Posterior vena cava (tissue), 2 donors: ENCODE measurements at regions of chr11 and their contacts with region 1.

Region 1: GRCh38 chr11:115112754-115113153 is 391.5 kb downstream of the CADM1 start:
- DNase-seq: no peak

Region 2: DNA sequence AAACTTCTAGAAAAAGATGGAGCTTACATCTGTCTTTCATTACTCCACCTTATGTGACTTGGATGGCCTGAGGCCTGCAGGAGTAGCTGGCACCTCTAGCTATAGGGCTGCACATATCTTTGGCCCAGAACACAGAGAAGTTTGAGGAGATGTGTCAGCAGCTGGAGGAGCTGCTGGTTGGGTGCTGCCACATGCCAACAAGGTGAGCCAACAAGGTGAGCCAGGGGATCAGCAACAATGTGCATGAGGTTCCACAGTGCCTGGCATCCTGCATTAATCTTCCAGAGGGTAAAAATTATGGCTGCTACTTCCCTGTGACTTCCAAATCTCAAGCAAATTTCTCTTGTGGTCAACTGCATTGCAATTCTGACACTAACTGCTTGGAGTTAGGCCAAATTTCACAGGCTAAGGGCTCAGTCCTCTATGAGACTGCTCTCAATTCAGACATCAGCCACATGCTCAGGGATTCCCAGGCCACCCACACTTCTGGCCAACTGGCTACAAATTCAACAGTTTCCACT is 696.3 kb before region 1 on chr11:
- intact Hi-C with region 1: loop called in 1 of 2 experiments (anchors 5 kb)
- DNase-seq: no peak

Region 3: DNA sequence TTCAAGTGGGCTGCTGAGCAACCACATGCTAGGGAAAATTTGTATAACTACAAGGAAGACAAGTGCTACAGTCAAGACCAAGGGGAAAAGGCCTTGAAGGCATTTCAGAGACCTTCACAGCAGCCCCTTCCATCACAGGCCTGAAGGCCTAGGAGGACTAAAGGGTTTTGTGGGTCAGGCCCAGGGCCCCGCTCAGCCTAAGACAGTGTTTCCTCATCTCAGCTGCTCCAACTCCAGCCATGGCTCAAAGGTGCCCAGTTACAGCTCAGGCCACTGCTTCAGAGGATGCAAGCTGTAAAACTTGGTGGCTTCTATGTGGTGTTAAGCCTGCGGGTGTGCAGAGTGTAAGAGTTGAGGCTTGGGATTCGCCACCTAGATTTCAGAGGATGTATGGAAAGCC is 174.0 kb before region 1 on chr11:
- intact Hi-C with region 1: no loop called
- DNase-seq: no peak

Region 4: GRCh38 chr11:114953039-114953438 is 159.7 kb before region 1 on chr11:
- intact Hi-C with region 1: no loop called
- DNase-seq: no peak

Region 5: DNA sequence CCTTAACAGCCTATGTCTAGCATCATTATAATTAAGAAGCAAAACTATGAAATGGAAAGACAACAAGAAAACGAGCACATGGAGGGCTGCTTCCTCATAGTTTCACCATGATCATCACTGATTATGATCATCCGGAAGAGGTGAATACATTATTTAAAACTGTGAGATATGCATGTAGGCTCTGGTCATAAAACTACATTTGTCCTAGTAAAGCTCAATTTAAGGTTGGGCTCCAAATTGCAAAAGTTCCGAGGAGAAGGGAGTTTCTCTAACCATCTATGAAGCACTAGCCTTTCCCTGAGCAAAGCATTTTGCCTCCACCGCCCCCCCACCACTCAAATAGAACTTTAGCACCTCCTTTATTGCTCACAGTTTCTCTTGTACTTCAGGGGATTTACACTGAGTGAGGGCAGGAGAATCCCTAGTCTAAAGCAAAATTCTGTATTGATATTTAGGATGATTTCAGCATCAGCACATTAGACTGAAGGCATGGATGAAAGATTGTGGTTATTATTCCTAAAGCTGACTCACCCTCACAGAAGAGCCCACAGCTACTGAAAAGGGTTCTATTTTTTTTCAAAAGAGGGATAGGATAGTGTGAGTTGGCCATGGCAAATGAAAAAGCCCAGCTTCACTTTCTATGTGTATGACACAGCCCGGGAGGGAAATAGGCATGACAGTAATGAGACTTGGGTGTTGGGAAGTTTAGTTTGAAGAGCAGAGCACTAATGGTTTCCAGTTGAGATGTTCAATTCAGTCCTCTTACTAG is 188.1 kb after region 1 on chr11:
- intact Hi-C with region 1: no loop called
- DNase-seq: no peak